ENCODE measurements at regions of chr12 and their contacts with region 1.

Region 1: DNA sequence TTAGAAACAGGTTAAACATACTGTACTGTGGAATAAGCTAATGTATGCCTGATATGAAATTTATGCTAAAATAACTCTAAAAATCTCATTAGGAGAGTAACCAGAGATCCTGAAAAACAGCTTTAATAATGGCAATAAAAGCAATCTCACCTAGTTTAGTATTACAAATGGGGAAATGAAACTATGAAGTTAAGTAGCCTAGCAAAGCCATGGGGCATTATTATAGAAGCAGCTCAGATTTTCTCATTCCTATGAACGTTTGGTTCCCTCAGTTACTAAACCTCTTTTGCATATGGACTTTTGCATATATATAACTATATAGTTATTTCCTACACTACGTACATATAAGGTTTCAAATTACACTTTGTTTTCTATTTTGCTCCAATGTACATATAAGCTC is 25.0 kb upstream of the APPL2 start:
- DNase-seq: peak; percentile 63
- H3K4me3 ChIP-seq: peak overlapping the region; percentile 25
- H3K27ac ChIP-seq: peak overlapping the region; percentile 13
- H3K4me1 ChIP-seq: peaks cover 23% of the 10 kb centered on the region
- CTCF ChIP-seq: no peak

Region 2: DNA sequence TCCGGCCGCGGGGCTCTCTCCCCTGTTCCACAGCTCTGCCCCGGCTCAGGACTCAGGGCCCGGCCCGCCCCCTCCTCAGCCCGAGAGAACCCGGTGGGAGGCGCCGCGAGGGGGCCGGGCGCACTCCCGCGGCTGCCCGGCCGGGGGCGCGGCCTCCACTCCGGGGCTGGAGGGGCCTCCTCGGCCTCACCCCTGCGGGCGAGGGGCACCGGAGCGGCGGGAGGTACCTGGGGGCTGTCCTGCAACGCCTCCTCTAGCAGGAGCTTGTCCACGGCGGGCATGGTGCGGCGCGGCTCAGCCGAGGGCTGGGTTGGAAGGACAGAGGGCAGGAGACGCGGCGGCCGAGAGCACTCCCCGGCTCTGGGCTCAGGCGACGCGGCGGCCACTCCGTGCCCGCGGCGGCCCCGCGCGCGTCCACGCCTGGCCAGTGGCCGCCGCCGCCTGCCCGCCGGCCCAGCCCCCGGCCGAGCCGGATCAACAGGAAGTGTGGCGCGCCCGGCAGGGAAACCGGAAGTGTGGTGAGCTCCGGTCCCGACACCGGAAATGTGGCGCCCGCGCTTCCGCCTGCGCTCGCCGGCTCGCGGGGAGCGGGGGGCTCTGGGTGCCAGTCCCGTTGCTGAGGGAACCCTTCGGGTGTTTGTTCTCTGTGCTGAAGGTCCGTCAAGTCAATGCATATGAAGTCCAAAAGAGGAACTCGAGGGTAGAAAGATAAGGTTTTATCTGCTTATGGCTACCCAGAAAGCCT is 25.1 kb before region 1 on chr12 and contains the start of gene APPL2:
- CTCF ChIA-PET with region 1: no interaction called
- POLR2A ChIA-PET with region 1: interaction called, 12 read pairs
- intact Hi-C with region 1: no loop called
- DNase-seq: peak; percentile 93
- H3K4me3 ChIP-seq: peak within 1 kb of the TSS; percentile 80
- H3K27ac ChIP-seq: peak within 1 kb of the TSS; percentile 42
- H3K4me1 ChIP-seq: peaks cover 39% of the 10 kb centered on the region
- CTCF ChIP-seq: peak; percentile 67
- total RNA-seq, gene APPL2: 18.8 and 20.9 TPM in 2 replicates

Region 3: GRCh38 chr12:105761075-105761474 is 500.1 kb after region 1 on chr12:
- CTCF ChIA-PET with region 1: no interaction called
- POLR2A ChIA-PET with region 1: no interaction called
- intact Hi-C with region 1: no loop called
- DNase-seq: no peak
- H3K4me3 ChIP-seq: no peak overlapping the region
- H3K27ac ChIP-seq: no peak overlapping the region
- H3K4me1 ChIP-seq: no peaks in the 10 kb centered on the region
- CTCF ChIP-seq: no peak